OCI-LY7 (cell line): ENCODE measurements at regions of chr1 and their contacts with region 1.

Region 1: GRCh38 chr1:27321813-27322577 is at the start of gene TMEM222:
- DNase-seq: peak; percentile 98
- H3K4me3 ChIP-seq: peak within 1 kb of the TSS; percentile 98
- H3K27ac ChIP-seq: peak within 1 kb of the TSS; percentile 75
- H3K4me1 ChIP-seq: peaks cover 10% of the 10 kb centered on the region
- CTCF ChIP-seq: no peak
- total RNA-seq, gene TMEM222: 32.8 and 43.4 TPM in 2 replicates

Region 2: DNA sequence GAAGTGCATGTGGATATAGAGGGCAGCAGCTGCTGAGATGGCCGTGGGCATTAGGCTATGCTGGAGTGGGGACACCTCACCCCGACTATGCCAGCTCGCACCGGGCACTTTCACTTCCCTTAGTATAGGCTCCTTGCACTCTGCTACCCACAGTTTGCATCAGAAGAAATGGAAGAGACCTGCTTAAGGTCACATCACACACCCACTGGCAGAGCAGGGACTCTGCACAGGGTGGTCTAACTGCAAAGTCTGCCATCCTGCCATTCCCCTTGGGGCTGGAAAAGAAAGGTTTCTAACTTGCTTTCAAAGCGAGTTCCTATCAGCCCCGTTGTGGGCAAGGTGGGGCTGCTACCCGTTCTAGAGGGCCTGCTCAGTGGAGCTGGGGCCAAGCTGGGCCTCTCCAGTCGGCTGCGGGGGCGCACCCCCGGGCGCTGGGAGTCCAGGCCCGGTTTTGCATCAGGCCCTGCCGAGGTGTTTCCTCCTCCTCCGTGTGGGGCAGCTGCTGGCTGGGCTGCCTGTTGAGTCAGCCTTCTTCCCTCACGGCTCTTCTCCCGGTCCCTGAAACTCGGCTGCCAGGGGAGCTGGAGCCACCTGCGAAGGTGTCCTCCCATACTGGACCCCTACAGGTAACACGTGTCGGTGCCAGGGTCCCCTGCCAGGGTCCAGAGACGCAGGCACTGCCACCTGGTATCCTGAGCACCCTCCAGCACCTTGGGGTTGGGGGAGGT is 19.7 kb after region 1 on chr1 and contains the start of gene SYTL1:
- CTCF ChIA-PET with region 1: interaction called, 3 read pairs
- POLR2A ChIA-PET with region 1: interaction called, 8 read pairs
- intact Hi-C with region 1: loop called (anchors 1 kb)
- DNase-seq: peak; percentile 90
- H3K4me3 ChIP-seq: peak within 1 kb of the TSS; percentile 81
- H3K27ac ChIP-seq: peak within 1 kb of the TSS; percentile 70
- H3K4me1 ChIP-seq: peaks cover 44% of the 10 kb centered on the region
- CTCF ChIP-seq: no peak; the same call in 1 of the 2 replicates
- total RNA-seq, gene SYTL1: 67.9 and 117 TPM in 2 replicates

Region 3: GRCh38 chr1:27365372-27366112 is 43.5 kb after region 1 on chr1:
- CTCF ChIA-PET with region 1: no interaction called
- POLR2A ChIA-PET with region 1: interaction called, 3 read pairs
- intact Hi-C with region 1: loop called (anchors 2 kb)
- DNase-seq: peak; percentile 87
- H3K4me3 ChIP-seq: peak overlapping the region; percentile 62
- H3K27ac ChIP-seq: peak overlapping the region; percentile 5
- H3K4me1 ChIP-seq: peaks cover 22% of the 10 kb centered on the region
- CTCF ChIP-seq: no peak